ENCODE measurements at regions of chr14 and their contacts with region 1.

Region 1: GRCh38 chr14:69107407-69108003 is 45.4 kb downstream of the DCAF5 start:
- DNase-seq: peak; percentile 34
- ATAC-seq: peak; percentile 78
- H3K4me3 Mint-ChIP-seq: no peak overlapping the region
- H3K27ac Mint-ChIP-seq: no peak overlapping the region
- H3K4me1 Mint-ChIP-seq: peaks cover 3% of the 10 kb centered on the region
- H3K27me3 Mint-ChIP-seq: no peaks in the 10 kb centered on the region

Region 2: GRCh38 chr14:68476212-68476907 is 631.1 kb before region 1 on chr14:
- CTCF ChIA-PET with region 1: no interaction called
- POLR2A ChIA-PET with region 1: no interaction called
- intact Hi-C with region 1: no loop called
- DNase-seq: peak; percentile 38
- ATAC-seq: peak; percentile 72
- H3K4me3 Mint-ChIP-seq: no peak overlapping the region
- H3K27ac Mint-ChIP-seq: no peak overlapping the region
- H3K4me1 Mint-ChIP-seq: peaks cover 17% of the 10 kb centered on the region
- H3K27me3 Mint-ChIP-seq: no peaks in the 10 kb centered on the region

Region 3: GRCh38 chr14:68733086-68733801 is 374.3 kb before region 1 on chr14:
- CTCF ChIA-PET with region 1: no interaction called
- POLR2A ChIA-PET with region 1: no interaction called
- intact Hi-C with region 1: no loop called
- DNase-seq: peak; percentile 67
- ATAC-seq: peak; percentile 83
- H3K4me3 Mint-ChIP-seq: peak overlapping the region; percentile 38
- H3K27ac Mint-ChIP-seq: peak overlapping the region; percentile 81
- H3K4me1 Mint-ChIP-seq: peaks cover 57% of the 10 kb centered on the region
- H3K27me3 Mint-ChIP-seq: no peaks in the 10 kb centered on the region

Region 4: DNA sequence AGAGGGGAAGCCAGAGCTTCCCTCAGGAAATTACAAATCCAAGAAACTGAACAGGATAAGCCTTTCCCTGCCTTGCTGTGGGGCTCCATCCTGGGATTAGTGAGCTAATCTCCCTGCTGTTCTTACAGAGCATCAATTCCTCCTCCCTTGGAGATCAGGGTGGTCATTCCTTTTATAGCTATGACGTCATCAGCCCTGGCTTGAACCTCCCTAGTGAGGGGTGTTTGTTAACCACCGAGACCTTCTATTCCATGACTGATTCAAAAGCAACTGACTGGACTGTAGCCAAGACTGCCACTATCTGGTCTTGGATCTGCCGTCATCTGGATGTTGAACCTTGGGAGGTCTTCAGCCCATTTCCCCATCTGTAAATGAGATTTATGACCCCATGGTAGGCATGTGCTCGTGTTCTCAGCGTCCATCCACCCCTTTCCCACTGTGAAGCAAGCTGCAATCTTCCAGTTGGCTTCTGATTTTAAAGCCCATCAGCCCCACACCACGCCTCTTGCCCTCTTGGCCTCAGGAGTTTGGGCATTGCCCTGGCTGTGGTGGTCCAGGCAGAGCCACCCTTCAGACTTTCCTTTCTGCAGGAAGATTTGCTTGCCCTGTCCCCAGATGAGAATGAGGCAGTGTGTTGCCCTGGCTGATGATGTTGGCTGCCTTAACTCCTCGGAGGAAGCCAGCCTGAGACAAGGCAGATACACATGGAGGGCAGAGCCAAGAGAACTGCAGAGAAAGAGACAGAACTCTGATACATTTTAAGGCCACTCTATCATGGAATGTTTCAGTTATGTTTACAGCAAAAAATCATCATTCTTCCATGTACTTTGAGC is 68.8 kb before region 1 on chr14:
- CTCF ChIA-PET with region 1: no interaction called
- POLR2A ChIA-PET with region 1: no interaction called
- intact Hi-C with region 1: no loop called
- DNase-seq: no peak
- ATAC-seq: no peak
- H3K4me3 Mint-ChIP-seq: no peak overlapping the region
- H3K27ac Mint-ChIP-seq: no peak overlapping the region
- H3K4me1 Mint-ChIP-seq: peaks cover 12% of the 10 kb centered on the region
- H3K27me3 Mint-ChIP-seq: peaks cover 31% of the 10 kb centered on the region

Region 5: GRCh38 chr14:69090187-69090789 is 17.2 kb before region 1 on chr14:
- CTCF ChIA-PET with region 1: interaction called, 12 read pairs
- POLR2A ChIA-PET with region 1: no interaction called
- intact Hi-C with region 1: no loop called
- DNase-seq: peak; percentile 44
- ATAC-seq: peak; percentile 77
- H3K4me3 Mint-ChIP-seq: no peak overlapping the region
- H3K27ac Mint-ChIP-seq: no peak overlapping the region
- H3K4me1 Mint-ChIP-seq: peaks cover 13% of the 10 kb centered on the region
- H3K27me3 Mint-ChIP-seq: no peaks in the 10 kb centered on the region

Measured in activated CD4-positive, alpha-beta T cell treated with anti-CD3 and anti-CD28 coated beads for 36 hours (primary cell).